ENCODE measurements at regions of chr7 and their contacts with region 1.

Region 1: DNA sequence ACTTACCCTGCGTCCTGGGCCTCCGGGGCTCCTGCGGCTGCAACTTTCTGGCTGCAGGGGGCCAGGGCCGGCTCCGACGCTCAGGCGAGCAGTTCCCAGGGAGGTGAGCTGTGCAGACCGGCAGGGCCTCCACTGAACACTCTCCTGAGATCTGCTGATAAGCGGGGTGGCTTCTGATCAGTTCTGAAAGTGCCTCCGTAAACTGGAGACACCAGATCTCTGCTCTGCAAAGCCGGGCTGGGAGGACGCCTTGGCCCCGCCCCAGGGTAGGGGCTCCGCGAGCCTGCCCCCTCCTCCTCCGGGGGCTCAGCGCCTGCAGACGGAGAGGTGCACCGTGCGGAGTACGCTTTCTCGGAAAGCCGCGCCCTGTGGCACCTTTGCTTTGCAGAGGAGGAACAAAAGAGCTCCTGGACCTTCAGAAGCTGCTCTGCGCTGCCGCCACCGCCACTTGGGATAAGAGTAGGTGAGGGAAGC is 141.3 kb upstream of the VKORC1L1 start:
- DNase-seq: no peak
- H3K4me3 ChIP-seq: no peak overlapping the region
- H3K27ac ChIP-seq: no peak overlapping the region
- H3K4me1 ChIP-seq: no peaks in the 10 kb centered on the region
- H3K27me3 ChIP-seq: no peaks in the 10 kb centered on the region
- CTCF ChIP-seq: no peak
- POLR2A ChIP-seq: no peak

Region 2: DNA sequence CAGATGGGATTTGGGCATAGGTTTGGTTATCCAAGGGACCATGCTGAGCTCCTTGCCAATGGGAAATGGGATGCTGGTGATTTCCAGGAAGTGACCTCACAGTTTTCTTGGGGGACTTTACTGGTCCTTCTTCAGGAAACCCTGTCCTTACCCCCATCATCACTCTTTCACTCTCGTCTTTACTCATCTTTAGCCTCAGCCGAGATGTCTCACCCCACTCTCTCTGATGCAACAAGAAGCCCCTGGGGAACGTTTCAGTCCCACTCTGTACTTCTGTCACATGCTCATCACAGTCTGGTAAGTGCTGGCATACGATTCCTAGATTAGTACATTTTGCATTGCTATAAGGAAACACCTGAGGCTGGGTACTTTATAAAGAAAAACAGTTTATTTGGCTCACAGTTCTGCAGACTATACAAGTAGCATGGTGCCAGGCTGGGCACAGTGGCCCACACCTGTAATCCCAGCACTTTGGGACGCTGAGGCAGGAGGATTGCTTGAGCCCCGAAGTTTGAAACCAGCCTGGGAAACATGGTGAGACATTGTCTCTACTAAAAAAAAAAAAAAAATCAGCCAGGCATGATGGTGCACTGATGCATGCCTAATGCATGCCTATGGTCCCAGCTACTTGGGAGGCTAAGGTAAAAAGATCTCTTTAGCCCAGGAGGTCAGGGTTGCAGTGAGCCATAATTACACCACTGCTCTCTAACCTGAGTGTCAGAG is 77.8 kb after region 1 on chr7:
- intact Hi-C with region 1: no loop called
- DNase-seq: no peak
- H3K4me3 ChIP-seq: no peak overlapping the region
- H3K27ac ChIP-seq: no peak overlapping the region
- H3K4me1 ChIP-seq: no peaks in the 10 kb centered on the region
- H3K27me3 ChIP-seq: no peaks in the 10 kb centered on the region
- CTCF ChIP-seq: no peak
- POLR2A ChIP-seq: no peak

Region 3: DNA sequence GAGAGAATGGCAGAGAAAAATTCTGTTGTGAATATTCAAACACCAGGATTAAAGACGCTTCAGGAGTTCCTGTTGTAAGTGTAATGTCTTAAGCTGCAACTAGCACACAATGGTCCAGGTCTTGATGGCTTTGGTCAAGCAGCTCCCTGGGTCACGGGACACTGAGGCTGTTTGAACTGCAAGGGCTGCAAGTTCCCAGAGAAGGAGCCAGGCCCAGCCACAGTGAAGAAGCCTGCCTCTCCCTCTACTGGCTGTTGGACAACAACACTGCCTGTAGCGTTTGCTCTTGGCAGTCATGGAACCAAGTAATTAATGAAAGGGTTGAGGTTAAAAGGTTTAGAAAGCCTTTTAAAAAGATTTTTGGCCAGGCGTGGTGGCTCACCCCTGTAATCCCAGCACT is 282.3 kb after region 1 on chr7:
- intact Hi-C with region 1: loop called (anchors 10 kb)
- DNase-seq: peak; percentile 81
- H3K4me3 ChIP-seq: no peak overlapping the region
- H3K27ac ChIP-seq: no peak overlapping the region
- H3K4me1 ChIP-seq: no peaks in the 10 kb centered on the region
- H3K27me3 ChIP-seq: no peaks in the 10 kb centered on the region
- CTCF ChIP-seq: peak; percentile 31 to 44 (median 38)
- POLR2A ChIP-seq: no peak

Measured in testis (tissue), 5 donors.